B cell (primary cell): ENCODE measurements at regions of chrX and their contacts with region 1.

Region 1: DNA sequence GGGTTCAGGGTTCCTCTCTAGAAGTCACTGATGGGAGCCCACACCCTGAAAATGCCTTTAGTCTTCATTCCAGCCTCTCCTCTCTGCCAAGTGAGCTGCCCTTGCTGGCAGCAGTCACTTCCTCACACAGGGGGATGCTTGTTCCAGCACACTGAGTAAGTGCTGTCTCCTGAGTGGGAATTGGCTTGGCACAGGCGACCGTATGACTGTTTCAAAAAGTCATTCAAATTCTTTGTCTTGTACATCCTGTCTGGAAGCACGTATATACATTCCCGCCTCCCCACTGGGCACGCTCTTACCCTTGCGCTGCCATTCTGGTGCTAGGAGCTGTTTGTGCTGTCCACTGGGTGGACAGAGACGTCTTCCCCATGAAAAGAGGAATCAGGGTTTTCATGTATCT is 40.2 kb upstream of the CD99 start:
- DNase-seq: no peak
- ATAC-seq: no peak
- H3K4me3 ChIP-seq: no peak overlapping the region
- H3K4me3 Mint-ChIP-seq: no peak overlapping the region
- H3K27ac ChIP-seq: no peak overlapping the region
- H3K27ac Mint-ChIP-seq: no peak overlapping the region
- H3K4me1 ChIP-seq: no peaks in the 10 kb centered on the region
- H3K4me1 Mint-ChIP-seq: no peaks in the 10 kb centered on the region
- H3K27me3 ChIP-seq: no peaks in the 10 kb centered on the region
- H3K27me3 Mint-ChIP-seq: no peaks in the 10 kb centered on the region
- CTCF ChIP-seq: no peak

Region 2: DNA sequence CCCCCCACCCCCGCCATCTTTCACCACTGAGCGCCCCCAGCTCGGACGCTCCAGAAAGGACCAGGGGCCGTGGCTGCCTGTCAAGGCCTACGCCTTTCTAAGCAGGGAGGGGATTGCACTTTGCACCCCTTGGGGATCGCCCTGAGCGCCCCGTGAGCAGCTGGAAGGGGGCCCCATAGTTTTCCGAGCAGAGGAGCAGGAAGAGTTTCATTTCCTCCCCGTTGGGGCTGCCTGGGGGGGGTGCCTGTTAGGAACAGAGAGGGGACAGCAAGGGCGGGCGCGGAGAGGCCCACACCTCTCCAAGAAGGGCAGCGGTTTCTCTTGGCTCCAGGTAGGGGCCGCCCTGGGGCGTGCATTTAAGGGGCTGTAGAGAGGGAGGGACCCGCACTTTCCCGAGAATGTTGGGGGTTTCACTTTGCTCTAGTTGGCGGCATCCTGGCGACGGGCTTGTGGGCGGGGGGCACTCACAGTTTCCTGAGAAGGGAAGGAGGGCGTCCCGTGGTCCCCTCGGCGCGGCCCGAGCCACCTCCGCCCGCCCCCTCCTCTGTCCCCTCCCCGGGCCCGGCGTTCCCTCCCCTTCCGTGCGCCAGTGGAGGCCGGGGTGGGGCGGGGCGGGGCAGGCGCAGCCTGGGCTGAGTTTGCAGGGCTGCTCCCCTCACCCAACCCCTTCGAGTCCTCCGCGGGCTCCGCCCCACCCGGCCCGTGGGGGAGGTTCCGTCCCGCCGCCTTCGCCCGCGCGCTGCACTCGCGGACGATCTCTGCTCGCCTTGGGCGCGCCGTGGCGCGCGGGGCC is 42.0 kb before region 1 on chrX:
- CTCF ChIA-PET with region 1: no interaction called
- POLR2A ChIA-PET with region 1: no interaction called
- intact Hi-C with region 1: no loop called
- DNase-seq: peak; percentile 90
- ATAC-seq: peak; percentile 97
- H3K4me3 ChIP-seq: peak overlapping the region; percentile 36 to 89 (median 83)
- H3K4me3 Mint-ChIP-seq: peak overlapping the region; percentile 94
- H3K27ac ChIP-seq: peak overlapping the region; percentile 43 to 58
- H3K27ac Mint-ChIP-seq: peak overlapping the region; percentile 89
- H3K4me1 ChIP-seq: peaks cover 16 to 25% of the 10 kb centered on the region in 2 donors
- H3K4me1 Mint-ChIP-seq: peaks cover 32% of the 10 kb centered on the region
- H3K27me3 ChIP-seq: no peaks in the 10 kb centered on the region
- H3K27me3 Mint-ChIP-seq: no peaks in the 10 kb centered on the region
- CTCF ChIP-seq: no peak

Region 3: DNA sequence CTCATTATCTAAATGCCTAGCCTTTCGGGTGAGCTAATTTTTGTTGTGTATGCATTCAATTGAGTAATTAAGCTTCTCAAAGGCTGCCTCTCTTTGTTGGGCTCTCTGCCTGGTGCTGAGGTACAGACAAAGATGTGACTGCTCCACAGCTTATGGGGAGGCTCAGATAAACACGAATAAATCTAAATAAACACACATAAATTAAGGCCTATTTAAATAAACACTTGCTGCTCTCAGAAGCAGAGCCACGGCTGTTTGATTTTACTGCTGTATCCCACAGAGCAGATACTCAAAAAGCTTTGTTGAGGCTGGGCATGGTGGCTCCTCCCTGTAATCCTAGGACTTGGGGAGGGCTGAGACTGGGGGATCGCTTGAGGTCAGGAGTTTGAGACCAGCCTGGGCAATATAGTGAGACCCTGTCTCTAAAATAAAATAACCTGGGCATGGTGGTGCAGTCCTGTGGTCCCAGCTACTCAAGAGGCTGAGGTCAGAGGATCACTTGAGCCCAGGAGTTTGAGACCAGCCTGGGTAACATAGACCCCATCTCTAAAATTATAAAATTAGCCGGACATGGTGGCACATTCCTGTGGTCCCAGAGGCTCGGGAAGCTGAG is 31.8 kb after region 1 on chrX:
- CTCF ChIA-PET with region 1: no interaction called
- POLR2A ChIA-PET with region 1: no interaction called
- intact Hi-C with region 1: loop called (anchors 1 kb)
- DNase-seq: no peak
- ATAC-seq: no peak
- H3K4me3 ChIP-seq: no peak overlapping the region
- H3K4me3 Mint-ChIP-seq: no peak overlapping the region
- H3K27ac ChIP-seq: no peak overlapping the region
- H3K27ac Mint-ChIP-seq: no peak overlapping the region
- H3K4me1 ChIP-seq: no peaks in the 10 kb centered on the region
- H3K4me1 Mint-ChIP-seq: no peaks in the 10 kb centered on the region
- H3K27me3 ChIP-seq: no peaks in the 10 kb centered on the region
- H3K27me3 Mint-ChIP-seq: peaks cover 5% of the 10 kb centered on the region
- CTCF ChIP-seq: no peak

Region 4: GRCh38 chrX:2784026-2784425 is 133.2 kb after region 1 on chrX:
- CTCF ChIA-PET with region 1: no interaction called
- POLR2A ChIA-PET with region 1: no interaction called
- intact Hi-C with region 1: no loop called
- DNase-seq: no peak
- ATAC-seq: no peak
- H3K4me3 ChIP-seq: no peak overlapping the region
- H3K4me3 Mint-ChIP-seq: no peak overlapping the region
- H3K27ac ChIP-seq: no peak overlapping the region
- H3K27ac Mint-ChIP-seq: no peak overlapping the region
- H3K4me1 ChIP-seq: no peaks in the 10 kb centered on the region
- H3K4me1 Mint-ChIP-seq: no peaks in the 10 kb centered on the region
- H3K27me3 ChIP-seq: no peaks in the 10 kb centered on the region
- H3K27me3 Mint-ChIP-seq: peaks cover 10% of the 10 kb centered on the region
- CTCF ChIP-seq: no peak